Activated CD4-positive, alpha-beta memory T cell treated with anti-CD3 and anti-CD28 coated beads for 36 hours (primary cell): ENCODE measurements at regions of chr22 and their contacts with region 1.

Region 1: GRCh38 chr22:19178656-19179496 is at the start of gene SLC25A1:
- DNase-seq: peak; percentile 89
- H3K4me3 Mint-ChIP-seq: peak within 1 kb of the TSS; percentile 64
- H3K27ac Mint-ChIP-seq: no peak within 1 kb of the TSS
- H3K4me1 Mint-ChIP-seq: peaks cover 32% of the 10 kb centered on the region
- H3K27me3 Mint-ChIP-seq: no peaks in the 10 kb centered on the region
- total RNA-seq, gene SLC25A1: 62.9 to 67.4 TPM

Region 2: GRCh38 chr22:19011075-19011474 is 167.8 kb before region 1 on chr22:
- CTCF ChIA-PET with region 1: no interaction called
- POLR2A ChIA-PET with region 1: no interaction called
- intact Hi-C with region 1: no loop called
- DNase-seq: no peak
- H3K4me3 Mint-ChIP-seq: no peak overlapping the region
- H3K27ac Mint-ChIP-seq: no peak overlapping the region
- H3K4me1 Mint-ChIP-seq: no peaks in the 10 kb centered on the region
- H3K27me3 Mint-ChIP-seq: peaks cover 14% of the 10 kb centered on the region

Region 3: GRCh38 chr22:19085233-19085718 is 93.6 kb before region 1 on chr22:
- CTCF ChIA-PET with region 1: no interaction called
- POLR2A ChIA-PET with region 1: no interaction called
- intact Hi-C with region 1: no loop called
- DNase-seq: no peak
- H3K4me3 Mint-ChIP-seq: no peak overlapping the region
- H3K27ac Mint-ChIP-seq: no peak overlapping the region
- H3K4me1 Mint-ChIP-seq: peaks cover 7% of the 10 kb centered on the region
- H3K27me3 Mint-ChIP-seq: no peaks in the 10 kb centered on the region

Region 4: GRCh38 chr22:19109198-19110067 is 69.4 kb before region 1 on chr22:
- CTCF ChIA-PET with region 1: interaction called, 4 read pairs
- POLR2A ChIA-PET with region 1: no interaction called
- intact Hi-C with region 1: loop called (anchors 5 kb)
- DNase-seq: peak; percentile 67
- H3K4me3 Mint-ChIP-seq: peak overlapping the region; percentile 34
- H3K27ac Mint-ChIP-seq: peak overlapping the region; percentile 85
- H3K4me1 Mint-ChIP-seq: peaks cover 63% of the 10 kb centered on the region
- H3K27me3 Mint-ChIP-seq: no peaks in the 10 kb centered on the region

Region 5: GRCh38 chr22:19122143-19122751 is 56.6 kb before region 1 on chr22 and contains the start of gene DGCR2:
- CTCF ChIA-PET with region 1: no interaction called
- POLR2A ChIA-PET with region 1: no interaction called
- intact Hi-C with region 1: loop called (anchors 2 kb)
- DNase-seq: peak; percentile 98
- H3K4me3 Mint-ChIP-seq: peak within 1 kb of the TSS; percentile 88
- H3K27ac Mint-ChIP-seq: peak within 1 kb of the TSS; percentile 58
- H3K4me1 Mint-ChIP-seq: peaks cover 45% of the 10 kb centered on the region
- H3K27me3 Mint-ChIP-seq: no peaks in the 10 kb centered on the region
- total RNA-seq, gene DGCR2: 17.4 to 17.6 TPM

Region 6: DNA sequence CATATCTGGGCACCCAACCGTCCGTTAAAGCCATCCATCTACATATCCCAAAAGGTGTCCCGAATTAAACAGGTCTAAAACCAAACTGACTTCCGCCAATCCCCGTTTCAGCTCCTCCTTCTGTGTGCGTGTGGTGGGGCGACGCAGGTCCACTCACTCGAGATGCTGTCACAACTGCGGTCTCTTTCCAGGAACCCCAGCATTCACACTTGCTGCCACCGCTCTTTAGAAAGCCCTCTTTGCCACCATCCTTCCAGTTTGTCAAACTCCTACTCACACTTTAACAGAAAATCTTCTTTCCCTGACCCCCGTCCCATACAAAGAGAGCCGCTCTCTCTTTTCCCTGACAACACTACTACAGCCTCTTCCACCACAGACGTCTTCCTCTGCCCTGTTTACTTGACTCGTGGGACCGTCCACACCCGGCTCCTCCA is 34.9 kb before region 1 on chr22:
- CTCF ChIA-PET with region 1: interaction called, 22 read pairs
- POLR2A ChIA-PET with region 1: interaction called, 9 read pairs
- intact Hi-C with region 1: loop called (anchors 2 kb)
- DNase-seq: peak; percentile 64
- H3K4me3 Mint-ChIP-seq: peak overlapping the region; percentile 99
- H3K27ac Mint-ChIP-seq: peak overlapping the region; percentile 91
- H3K4me1 Mint-ChIP-seq: peaks cover 17% of the 10 kb centered on the region
- H3K27me3 Mint-ChIP-seq: peaks cover 6% of the 10 kb centered on the region

Region 7: DNA sequence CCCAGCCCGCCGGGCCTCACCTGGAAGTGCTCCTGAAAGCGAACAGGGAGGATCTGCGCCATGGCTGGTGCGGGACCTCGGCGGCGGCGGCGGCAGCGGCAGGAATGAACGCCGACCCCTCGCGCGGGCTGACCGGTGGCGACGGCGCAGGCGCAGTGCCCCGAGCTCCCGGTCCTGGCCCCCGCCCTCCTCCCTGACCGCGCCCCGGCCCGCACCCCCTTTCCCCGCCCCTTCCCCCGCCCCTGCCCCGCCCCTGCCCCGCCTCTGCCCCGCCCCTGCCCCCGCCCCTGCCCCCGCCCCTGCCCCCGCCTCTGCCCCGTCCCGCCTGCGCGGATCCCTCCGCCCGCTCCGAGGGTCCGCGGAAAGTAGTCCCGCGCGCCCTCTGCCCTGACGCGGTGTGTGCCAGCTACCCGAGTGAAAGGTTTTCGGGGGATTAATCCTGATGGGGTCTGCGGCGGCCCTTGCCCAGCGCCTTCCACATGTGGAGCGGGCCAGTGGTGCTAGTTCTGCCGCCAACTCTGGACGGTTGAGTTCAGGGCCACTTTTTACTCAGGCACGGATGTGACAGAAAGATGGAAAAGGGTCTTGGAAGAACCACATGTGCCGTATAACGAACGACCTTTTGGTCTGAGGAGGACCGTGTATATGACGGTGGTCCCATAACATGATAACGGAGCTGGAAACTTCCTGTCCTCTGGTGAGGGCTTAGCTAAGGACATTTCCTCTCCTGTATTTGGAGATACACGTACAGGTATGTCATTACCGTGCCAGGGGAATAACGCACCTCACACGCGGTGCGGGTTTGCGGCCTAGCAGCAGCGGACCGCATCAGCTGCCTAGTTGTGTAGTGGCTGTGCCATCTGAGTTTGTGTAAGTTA is 112.9 kb after region 1 on chr22 and contains the start of gene CLTCL1:
- CTCF ChIA-PET with region 1: interaction called, 8 read pairs
- POLR2A ChIA-PET with region 1: no interaction called
- intact Hi-C with region 1: loop called (anchors 2 kb)
- DNase-seq: peak; percentile 77
- H3K4me3 Mint-ChIP-seq: peak within 1 kb of the TSS; percentile 85
- H3K27ac Mint-ChIP-seq: peak within 1 kb of the TSS; percentile 62
- H3K4me1 Mint-ChIP-seq: peaks cover 16% of the 10 kb centered on the region
- H3K27me3 Mint-ChIP-seq: peaks cover 23% of the 10 kb centered on the region
- total RNA-seq, gene CLTCL1: 1.1 to 1.6 TPM